ENCODE measurements at regions of chr22 and their contacts with region 1.

Region 1: DNA sequence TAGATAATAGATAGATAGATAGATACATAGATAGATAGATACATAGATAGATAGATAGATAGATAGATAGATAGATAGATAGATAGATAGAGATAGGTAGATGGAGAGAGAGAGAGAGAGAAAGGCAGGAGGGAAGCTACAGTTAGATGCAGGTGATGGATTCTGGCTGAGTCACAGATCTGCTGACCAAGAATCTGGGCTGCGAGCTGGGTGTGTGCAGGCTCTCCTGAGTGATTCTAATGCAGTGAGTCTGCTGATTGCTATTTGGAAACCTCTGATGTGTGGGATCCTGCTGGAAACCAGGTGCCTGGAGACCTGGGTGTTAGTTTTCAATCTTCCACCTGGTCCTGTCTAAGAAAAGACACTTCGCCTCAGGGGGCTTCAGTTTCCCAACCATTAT is 1441.8 kb downstream of the TBC1D22A start:
- DNase-seq: no peak
- H3K4me3 ChIP-seq: no peak overlapping the region
- H3K4me3 Mint-ChIP-seq: no peak overlapping the region
- H3K27ac Mint-ChIP-seq: no peak overlapping the region
- H3K4me1 ChIP-seq: no peaks in the 10 kb centered on the region
- H3K4me1 Mint-ChIP-seq: no peaks in the 10 kb centered on the region
- H3K27me3 ChIP-seq: no peaks in the 10 kb centered on the region
- H3K27me3 Mint-ChIP-seq: no peaks in the 10 kb centered on the region
- CTCF ChIP-seq: no peak

Region 2: GRCh38 chr22:48234011-48234410 is 29.7 kb after region 1 on chr22:
- CTCF ChIA-PET with region 1: no interaction called
- POLR2A ChIA-PET with region 1: no interaction called
- intact Hi-C with region 1: no loop called
- DNase-seq: no peak
- H3K4me3 ChIP-seq: no peak overlapping the region
- H3K4me3 Mint-ChIP-seq: no peak overlapping the region
- H3K27ac Mint-ChIP-seq: no peak overlapping the region
- H3K4me1 ChIP-seq: no peaks in the 10 kb centered on the region
- H3K4me1 Mint-ChIP-seq: no peaks in the 10 kb centered on the region
- H3K27me3 ChIP-seq: no peaks in the 10 kb centered on the region
- H3K27me3 Mint-ChIP-seq: no peaks in the 10 kb centered on the region
- CTCF ChIP-seq: no peak

Region 3: DNA sequence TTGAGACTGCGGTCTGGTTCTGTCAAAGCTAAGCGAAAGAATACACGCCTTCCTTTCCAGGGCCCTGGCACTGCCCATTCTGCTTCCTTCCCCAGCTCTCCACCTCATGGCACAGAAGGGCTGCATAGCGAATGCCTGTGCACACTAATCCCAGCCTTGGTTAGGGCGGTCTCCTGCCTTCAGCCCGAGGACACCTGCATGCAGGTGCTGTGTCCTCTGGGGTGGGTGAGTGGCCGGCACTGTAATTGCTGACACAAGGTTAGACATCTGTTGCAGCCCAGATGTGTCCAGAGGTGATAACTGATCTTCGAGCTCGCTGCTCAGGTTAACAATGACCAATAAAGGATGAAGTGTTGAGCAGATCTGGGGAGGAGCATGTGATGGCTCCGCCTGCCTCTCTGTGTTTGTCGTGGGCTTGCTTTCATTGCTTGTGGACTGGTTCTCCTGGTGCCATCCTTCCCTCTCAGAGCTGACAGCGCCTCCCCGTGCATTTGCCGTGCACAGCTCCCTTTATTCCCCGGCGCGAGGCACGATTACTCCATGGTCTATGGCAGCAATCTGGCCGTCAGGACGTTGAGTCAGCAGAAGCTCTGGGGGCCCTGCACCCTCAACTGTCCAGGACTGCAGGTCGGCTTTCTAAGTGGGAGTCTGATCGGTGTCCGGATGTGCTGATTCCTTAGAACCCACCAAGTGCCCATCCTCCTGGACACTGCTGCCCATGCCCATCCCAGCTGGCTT is 535.2 kb after region 1 on chr22:
- CTCF ChIA-PET with region 1: no interaction called
- POLR2A ChIA-PET with region 1: no interaction called
- intact Hi-C with region 1: loop called (anchors 10 kb)
- DNase-seq: no peak
- H3K4me3 ChIP-seq: no peak overlapping the region
- H3K4me3 Mint-ChIP-seq: no peak overlapping the region
- H3K27ac Mint-ChIP-seq: no peak overlapping the region
- H3K4me1 ChIP-seq: no peaks in the 10 kb centered on the region
- H3K4me1 Mint-ChIP-seq: no peaks in the 10 kb centered on the region
- H3K27me3 ChIP-seq: no peaks in the 10 kb centered on the region
- H3K27me3 Mint-ChIP-seq: peaks cover 2% of the 10 kb centered on the region
- CTCF ChIP-seq: no peak